OCI-LY7 (cell line): ENCODE measurements at regions of chr2 and their contacts with region 1.

Region 1: DNA sequence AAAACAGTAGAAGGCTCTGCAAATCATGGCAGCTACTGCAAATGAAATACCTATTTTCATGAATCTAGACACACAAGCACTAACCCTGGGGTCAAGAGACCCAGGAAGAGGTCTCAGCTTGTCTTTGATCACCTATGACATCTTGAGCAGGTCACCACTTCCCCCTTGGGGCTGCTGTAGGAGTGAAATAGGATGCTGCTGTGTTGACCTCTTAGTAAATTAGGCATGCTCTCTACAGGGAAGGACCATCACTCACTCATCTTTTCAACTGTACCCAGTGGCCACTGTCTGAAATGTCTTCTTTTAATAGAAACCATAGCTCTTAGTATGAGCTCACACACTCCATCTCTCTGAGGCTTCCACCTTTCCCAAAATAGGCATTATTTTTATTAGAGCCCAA is 83.8 kb downstream of the NCK2 start:
- DNase-seq: peak; percentile 33
- H3K4me3 ChIP-seq: no peak overlapping the region
- H3K27ac ChIP-seq: no peak overlapping the region
- H3K4me1 ChIP-seq: peaks cover 20% of the 10 kb centered on the region
- CTCF ChIP-seq: no peak

Region 2: GRCh38 chr2:105802587-105802986 is 26.0 kb before region 1 on chr2:
- CTCF ChIA-PET with region 1: no interaction called
- POLR2A ChIA-PET with region 1: interaction called, 10 read pairs
- intact Hi-C with region 1: no loop called
- DNase-seq: peak; percentile 79
- H3K4me3 ChIP-seq: peak overlapping the region; percentile 35
- H3K27ac ChIP-seq: peak overlapping the region; percentile 52
- H3K4me1 ChIP-seq: peaks cover 69% of the 10 kb centered on the region
- CTCF ChIP-seq: no peak

Region 3: GRCh38 chr2:105849431-105850179 is 21.0 kb after region 1 on chr2:
- CTCF ChIA-PET with region 1: no interaction called
- POLR2A ChIA-PET with region 1: no interaction called
- intact Hi-C with region 1: no loop called
- DNase-seq: peak; percentile 76
- H3K4me3 ChIP-seq: no peak overlapping the region
- H3K27ac ChIP-seq: peak overlapping the region; percentile 45
- H3K4me1 ChIP-seq: peaks cover 16% of the 10 kb centered on the region
- CTCF ChIP-seq: no peak